ENCODE measurements at regions of chr9 and their contacts with region 1.

Region 1: GRCh38 chr9:19161257-19162025 is 34.1 kb upstream of the PLIN2 start:
- DNase-seq: peak; percentile 56
- H3K4me3 Mint-ChIP-seq: peak overlapping the region; percentile 33
- H3K27ac Mint-ChIP-seq: peak overlapping the region; percentile 89
- H3K4me1 Mint-ChIP-seq: peaks cover 16% of the 10 kb centered on the region
- H3K27me3 Mint-ChIP-seq: no peaks in the 10 kb centered on the region

Region 2: DNA sequence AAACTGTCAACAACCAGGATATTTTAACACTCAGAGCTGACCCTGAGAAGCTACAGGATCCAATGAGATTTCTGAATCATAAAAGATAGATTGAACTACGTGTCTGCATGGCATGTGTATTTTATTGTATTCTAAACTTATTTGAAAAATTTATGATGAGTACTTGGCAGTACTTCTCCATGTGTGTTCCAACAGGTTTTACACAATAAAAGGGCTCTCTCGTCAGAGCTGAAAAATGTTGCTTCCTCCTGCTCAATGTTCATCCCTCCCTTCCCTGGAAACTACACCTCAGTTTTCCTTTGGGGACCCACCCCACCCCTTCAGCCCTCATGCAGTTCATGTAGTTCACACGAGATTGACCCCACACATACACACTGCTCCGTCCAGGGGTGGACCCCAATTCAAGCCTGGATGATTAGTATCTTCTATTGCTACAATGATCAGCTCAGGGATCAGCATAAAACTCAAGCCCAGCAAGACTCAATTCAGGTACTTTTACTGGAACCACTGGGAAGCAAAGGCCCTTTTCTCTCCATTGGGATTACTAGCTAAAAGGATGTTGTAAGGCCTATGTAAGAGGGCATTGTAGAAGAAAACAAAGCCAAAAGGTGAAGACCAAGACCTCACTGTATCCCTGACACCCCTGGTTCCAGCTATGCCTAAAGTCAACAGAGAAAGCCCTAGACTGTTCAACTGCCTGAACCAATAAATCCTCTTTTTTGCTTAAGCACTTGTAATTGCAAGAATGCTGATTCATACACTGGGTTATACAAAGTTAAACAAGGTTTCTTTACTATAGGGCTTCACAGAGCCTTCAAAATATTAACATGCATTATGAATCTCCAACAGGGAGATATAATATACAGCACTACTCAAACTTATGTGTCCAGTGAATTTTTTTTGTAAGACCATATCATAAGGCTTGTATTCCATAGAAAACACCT is 241.0 kb before region 1 on chr9:
- intact Hi-C with region 1: no loop called
- DNase-seq: no peak
- H3K4me3 Mint-ChIP-seq: no peak overlapping the region
- H3K27ac Mint-ChIP-seq: no peak overlapping the region
- H3K4me1 Mint-ChIP-seq: no peaks in the 10 kb centered on the region
- H3K27me3 Mint-ChIP-seq: no peaks in the 10 kb centered on the region

Region 3: DNA sequence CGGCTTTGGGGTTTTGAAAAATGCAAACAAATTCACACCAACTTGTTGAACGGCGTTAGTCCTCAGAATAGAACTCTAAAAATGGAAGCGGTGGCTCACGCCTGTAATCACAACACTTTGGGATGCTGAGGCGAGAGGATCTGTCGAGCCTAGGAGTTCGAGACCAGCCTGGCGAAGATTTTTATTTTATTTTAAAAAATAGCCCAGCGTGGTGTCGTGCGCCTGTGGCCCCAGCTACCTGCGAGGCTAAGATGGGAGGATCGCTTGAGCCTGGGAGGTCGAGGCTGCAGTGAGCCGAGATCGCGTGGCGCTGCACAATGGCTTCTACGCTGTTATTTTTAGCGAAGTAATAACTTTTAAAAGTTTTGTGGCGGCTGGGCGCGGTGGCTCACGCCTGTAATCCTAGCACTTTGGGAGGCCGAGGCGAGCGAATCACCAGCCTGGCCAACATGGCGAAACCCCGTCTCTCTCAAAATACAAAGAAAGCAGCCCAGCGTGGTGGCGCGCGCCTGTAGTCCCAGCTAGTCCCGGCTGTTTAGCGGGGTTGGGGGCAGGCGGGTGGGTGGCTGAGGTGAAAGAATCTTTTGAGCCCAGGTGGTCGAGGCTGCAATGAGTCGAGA is 33.5 kb before region 1 on chr9:
- intact Hi-C with region 1: loop called (anchors 1 kb)
- DNase-seq: peak; percentile 26
- H3K4me3 Mint-ChIP-seq: peak overlapping the region; percentile 88
- H3K27ac Mint-ChIP-seq: peak overlapping the region; percentile 94
- H3K4me1 Mint-ChIP-seq: peaks cover 53% of the 10 kb centered on the region
- H3K27me3 Mint-ChIP-seq: no peaks in the 10 kb centered on the region

Region 4: GRCh38 chr9:19133549-19134345 is 27.7 kb before region 1 on chr9:
- intact Hi-C with region 1: loop called (anchors 1 kb)
- DNase-seq: no peak
- H3K4me3 Mint-ChIP-seq: no peak overlapping the region
- H3K27ac Mint-ChIP-seq: peak overlapping the region; percentile 73
- H3K4me1 Mint-ChIP-seq: peaks cover 45% of the 10 kb centered on the region
- H3K27me3 Mint-ChIP-seq: no peaks in the 10 kb centered on the region

Region 5: GRCh38 chr9:19174127-19174912 is 12.9 kb after region 1 on chr9:
- intact Hi-C with region 1: loop called (anchors 1 kb)
- DNase-seq: peak; percentile 21
- H3K4me3 Mint-ChIP-seq: peak overlapping the region; percentile 9
- H3K27ac Mint-ChIP-seq: peak overlapping the region; percentile 46
- H3K4me1 Mint-ChIP-seq: peaks cover 29% of the 10 kb centered on the region
- H3K27me3 Mint-ChIP-seq: no peaks in the 10 kb centered on the region

Measured in activated T-helper 2 cell treated with anti-CD3 and anti-CD28 coated beads, Interferon-gamma antibody, Interleukin-2, Interleukin-4, amounts not matched to agents 10 μg/mL and 5 μg/mL and 100 μg/mL, durations not matched to agents 14 hours and 24 hours and 36 hours (primary cell).